ENCODE measurements at regions of chr1 and their contacts with region 1.

Region 1: DNA sequence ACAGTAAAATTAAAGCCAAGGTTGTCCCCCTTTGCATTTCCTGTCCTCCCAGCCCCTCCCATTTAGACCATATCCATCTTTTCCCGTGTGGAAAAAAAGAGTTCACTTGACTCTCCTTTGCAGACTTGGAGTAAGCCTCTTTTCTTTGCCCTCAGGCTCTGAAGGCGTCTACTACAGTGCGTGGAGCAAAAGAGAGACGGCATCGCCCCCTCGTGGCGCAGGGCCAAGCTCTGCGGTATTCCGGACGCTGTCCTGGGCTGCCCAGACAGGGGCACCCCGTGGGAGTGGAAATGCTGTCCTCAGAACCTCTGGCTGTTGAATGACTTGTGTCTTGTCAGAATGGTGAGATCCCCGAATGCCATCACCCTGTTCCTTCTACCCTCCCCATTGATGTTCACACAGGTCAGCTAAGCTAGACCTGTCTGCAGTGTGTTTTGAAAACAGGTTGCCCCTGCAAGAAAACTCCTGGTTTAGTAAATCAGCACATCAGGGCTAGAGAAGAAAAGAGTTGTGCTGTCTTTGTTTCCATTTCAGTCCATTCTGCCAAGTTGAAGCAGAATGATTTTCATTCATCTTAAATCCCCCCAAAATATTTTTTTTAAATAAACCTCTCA is 12.3 kb upstream of the GJA8 start:
- DNase-seq: peak; percentile 19
- H3K4me3 ChIP-seq: no peak overlapping the region
- H3K27ac ChIP-seq: no peak overlapping the region
- H3K4me1 ChIP-seq: no peaks in the 10 kb centered on the region
- H3K27me3 ChIP-seq: no peaks in the 10 kb centered on the region
- CTCF ChIP-seq: peak; percentile 81 to 91 (median 83)

Region 2: DNA sequence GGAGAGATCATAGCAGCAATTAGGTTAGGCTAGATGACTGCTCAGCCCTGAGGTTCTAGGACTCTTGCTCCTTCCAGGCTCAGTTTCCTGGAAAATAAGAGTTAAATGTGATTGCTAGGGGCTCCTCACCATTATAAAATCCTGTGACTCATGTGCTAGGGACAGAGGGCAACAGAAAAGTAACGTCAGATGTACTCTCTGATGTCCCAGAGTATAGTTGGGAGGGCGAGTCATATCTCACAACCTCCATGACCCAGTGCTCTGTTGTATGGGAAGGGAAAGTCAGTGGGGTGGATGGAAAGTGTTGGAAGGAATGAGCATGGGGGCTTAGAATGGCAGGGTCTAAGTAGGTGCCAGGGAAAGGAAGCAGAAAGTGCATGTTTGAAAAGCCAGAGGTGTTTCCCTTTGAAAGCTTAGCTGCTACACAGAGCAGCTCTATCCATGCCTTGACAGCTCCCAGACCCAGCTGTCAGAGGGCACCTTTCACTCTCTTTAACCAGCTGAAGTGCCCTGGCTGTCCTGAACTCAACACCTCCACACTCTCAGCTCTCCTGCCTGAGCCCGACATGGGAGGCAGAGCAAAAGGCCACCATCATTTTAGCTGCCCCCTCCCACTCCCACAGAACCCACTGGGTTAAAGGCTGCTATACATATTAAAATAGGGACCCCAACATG is 141.5 kb before region 1 on chr1:
- dilution Hi-C with region 1: loop called (anchors 25 kb)
- DNase-seq: no peak
- H3K4me3 ChIP-seq: no peak overlapping the region
- H3K27ac ChIP-seq: no peak overlapping the region
- H3K4me1 ChIP-seq: peaks cover 14% of the 10 kb centered on the region
- H3K27me3 ChIP-seq: no peaks in the 10 kb centered on the region
- CTCF ChIP-seq: no peak

Region 3: GRCh38 chr1:147824798-147825197 is 65.5 kb before region 1 on chr1:
- dilution Hi-C with region 1: no loop called
- DNase-seq: no peak
- H3K4me3 ChIP-seq: no peak overlapping the region
- H3K27ac ChIP-seq: no peak overlapping the region
- H3K4me1 ChIP-seq: no peaks in the 10 kb centered on the region
- H3K27me3 ChIP-seq: no peaks in the 10 kb centered on the region
- CTCF ChIP-seq: no peak

Region 4: DNA sequence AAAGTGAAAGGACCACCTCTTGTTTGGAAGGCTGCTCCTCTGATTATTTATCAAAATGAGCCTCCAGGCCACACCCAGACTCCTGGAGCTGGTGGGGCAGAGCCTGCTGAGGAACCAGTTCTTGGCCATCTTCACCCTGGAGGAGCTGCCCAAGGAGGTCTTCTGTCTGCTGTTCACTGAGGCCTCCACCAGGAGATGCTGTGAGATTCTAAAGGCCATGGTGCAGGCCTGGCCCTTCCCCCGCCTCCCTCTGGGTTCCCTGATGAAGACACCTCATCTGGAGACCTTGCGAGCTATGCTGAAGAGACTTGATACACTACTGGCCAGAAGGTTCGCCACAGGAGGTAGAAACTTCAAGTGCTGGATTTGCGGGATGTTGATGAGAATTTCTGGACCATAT is 49.4 kb before region 1 on chr1:
- dilution Hi-C with region 1: no loop called
- DNase-seq: no peak
- H3K4me3 ChIP-seq: no peak overlapping the region
- H3K27ac ChIP-seq: no peak overlapping the region
- H3K4me1 ChIP-seq: no peaks in the 10 kb centered on the region
- H3K27me3 ChIP-seq: no peaks in the 10 kb centered on the region
- CTCF ChIP-seq: peak in 2 of 3 experiments; percentile 12 to 33